Head of caudate nucleus (tissue), 42 donors: ENCODE measurements at regions of chr18 and their contacts with region 1.

Region 1: DNA sequence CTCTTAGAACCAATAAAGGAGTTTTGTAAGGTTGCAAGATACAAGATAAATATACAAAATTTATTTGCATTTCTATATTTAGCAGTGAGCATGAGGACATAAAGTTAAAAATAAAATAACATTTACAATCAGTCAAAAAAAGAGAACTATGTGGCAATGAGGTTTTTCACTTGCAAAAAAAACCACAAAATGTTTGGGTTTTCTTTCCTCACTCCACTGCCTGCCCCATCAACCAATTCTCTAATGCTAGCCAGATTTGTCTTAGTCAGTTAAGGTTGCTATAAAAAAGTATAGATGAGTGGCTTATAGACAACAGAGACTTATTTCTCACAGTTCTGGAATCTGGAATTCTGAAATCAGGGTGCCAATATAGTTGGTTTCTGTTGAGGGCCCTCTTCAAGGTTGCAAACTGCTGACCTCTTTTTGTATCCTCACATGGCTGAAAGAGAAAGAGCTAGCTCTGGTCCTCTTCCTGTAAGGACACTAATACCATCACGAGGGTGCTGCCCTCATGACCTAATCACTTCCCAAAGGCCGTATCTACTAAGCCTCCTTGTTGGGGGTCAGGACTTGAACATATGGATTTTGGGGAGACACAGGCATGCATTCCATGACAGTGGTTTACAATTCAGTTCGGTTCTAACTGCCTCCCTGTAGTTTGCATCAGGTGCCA is 566.2 kb downstream of the GALR1 start:
- DNase-seq: no peak

Region 2: DNA sequence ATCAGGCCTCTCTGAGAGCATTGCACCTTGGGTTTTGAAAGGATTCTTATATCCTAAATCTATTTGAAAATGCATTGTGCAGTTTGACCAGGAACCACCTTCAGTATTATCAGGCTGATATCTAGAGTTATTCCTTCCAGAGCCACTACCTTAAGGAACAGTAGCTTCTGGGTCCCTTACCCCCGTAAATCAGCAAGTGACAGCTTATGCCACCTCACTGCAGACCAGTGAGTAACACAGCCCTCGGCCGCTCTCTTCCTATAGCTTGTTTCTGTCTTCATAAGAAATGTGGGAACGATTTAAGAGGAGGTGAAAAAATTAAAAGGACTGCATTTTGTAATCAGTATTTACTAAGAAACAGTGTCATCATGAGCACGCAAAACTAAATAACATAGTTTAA is 18.0 kb after region 1 on chr18:
- intact Hi-C with region 1: loop called (anchors 2 kb)
- DNase-seq: no peak